ENCODE measurements at regions of chr15 and their contacts with region 1.

Region 1: DNA sequence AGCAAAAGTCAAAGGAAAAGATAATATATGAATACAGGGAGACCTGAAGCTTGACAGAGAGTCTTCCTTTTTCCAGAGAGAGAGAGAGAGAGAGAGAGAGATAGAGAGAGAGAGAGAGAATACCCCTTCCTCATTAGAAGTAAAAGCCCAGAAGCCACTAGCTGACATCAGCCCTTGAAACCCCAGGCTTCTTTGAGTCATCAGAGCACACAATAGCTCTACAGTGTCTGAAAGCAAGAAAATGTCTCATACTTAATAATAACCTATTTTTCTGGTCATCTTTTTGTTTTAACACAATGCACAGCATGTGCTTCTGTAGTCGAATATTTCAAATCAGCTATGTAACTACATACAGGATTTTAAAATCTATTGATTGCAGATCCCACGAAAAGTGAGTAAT is 109.2 kb upstream of the NANOGP8 start:
- DNase-seq: no peak
- H3K4me3 ChIP-seq: no peak overlapping the region
- H3K27ac ChIP-seq: no peak overlapping the region
- H3K4me1 ChIP-seq: no peaks in the 10 kb centered on the region
- H3K27me3 ChIP-seq: no peaks in the 10 kb centered on the region
- CTCF ChIP-seq: no peak
- POLR2A ChIP-seq: no peak

Region 2: DNA sequence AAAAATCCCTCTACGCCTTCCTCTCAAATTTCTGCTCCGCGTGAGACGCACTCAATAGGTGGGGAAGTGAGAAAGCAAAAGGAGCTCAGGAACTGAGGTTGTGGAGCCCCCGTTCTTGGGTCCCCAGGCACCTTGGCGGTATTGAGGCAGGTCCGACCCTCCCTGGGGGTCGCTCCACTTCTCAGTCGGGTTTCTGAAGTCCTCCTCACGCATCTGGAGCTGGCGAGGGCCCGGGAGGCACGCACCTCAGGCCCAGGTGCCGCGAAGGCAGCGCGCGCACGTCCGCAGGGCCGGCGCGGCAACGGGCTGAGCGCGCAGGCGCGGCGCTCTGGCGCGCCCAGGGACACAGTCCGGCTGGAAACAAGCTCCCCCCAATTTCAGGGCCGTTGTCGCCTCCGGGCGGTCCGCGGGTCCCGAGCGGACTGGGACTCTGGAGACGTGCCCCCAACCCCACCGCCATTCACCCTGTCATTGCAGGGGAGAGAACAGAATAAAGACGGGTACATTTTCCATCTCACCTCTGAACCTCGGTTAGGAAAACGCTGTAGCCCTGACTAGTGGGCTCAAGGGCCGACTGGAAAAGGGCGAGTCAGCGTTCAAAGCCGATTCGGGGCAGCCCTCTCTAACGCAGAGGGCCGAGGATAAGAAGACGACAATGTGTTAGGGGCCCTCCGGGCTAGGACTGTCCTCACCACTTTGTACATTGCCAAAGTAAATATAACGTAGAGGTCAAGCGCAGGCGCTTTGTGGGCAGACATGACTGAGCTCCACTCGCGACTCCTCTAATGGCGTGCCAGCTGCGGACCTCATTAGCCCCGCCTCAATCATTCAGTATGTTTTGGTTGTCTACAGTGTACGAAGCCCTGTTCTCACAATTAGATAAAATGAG is 206.1 kb before region 1 on chr15 and contains the start of gene ZNF770:
- intact Hi-C with region 1: no loop called
- DNase-seq: peak; percentile 60
- H3K4me3 ChIP-seq: peak within 1 kb of the TSS; percentile 81 to 88
- H3K27ac ChIP-seq: peak within 1 kb of the TSS; percentile 96 to 97
- H3K4me1 ChIP-seq: peaks cover 4% of the 10 kb centered on the region
- H3K27me3 ChIP-seq: no peaks in the 10 kb centered on the region
- CTCF ChIP-seq: peak in 2 of 4 experiments; percentile 37 to 44
- POLR2A ChIP-seq: peak; percentile 64
- total RNA-seq, gene ZNF770: 29.6 to 32.0 TPM

Region 3: DNA sequence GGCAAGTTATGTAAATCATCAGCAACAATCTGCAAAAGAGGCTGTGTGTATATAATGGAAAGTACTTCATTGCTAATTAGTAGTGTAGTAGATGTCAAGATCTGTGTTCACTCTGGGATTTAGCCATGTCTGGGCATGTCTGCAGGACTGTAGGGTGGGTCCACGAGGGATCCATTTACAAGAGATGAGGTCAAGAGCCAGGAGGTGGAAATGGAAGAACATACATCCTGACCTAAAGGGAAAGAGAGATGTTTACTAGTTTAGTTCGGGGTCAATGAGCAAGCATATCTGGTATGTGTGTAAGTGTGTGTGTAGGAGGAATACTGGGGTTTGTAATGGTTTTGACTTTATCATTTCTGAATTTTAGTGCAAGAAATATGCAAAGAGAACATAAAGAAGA is 62.3 kb after region 1 on chr15:
- intact Hi-C with region 1: loop called (anchors 10 kb)
- DNase-seq: no peak
- H3K4me3 ChIP-seq: no peak overlapping the region
- H3K27ac ChIP-seq: no peak overlapping the region
- H3K4me1 ChIP-seq: no peaks in the 10 kb centered on the region
- H3K27me3 ChIP-seq: no peaks in the 10 kb centered on the region
- CTCF ChIP-seq: no peak
- POLR2A ChIP-seq: no peak

Region 4: GRCh38 chr15:35358824-35359223 is 164.5 kb after region 1 on chr15:
- intact Hi-C with region 1: no loop called
- DNase-seq: no peak
- H3K4me3 ChIP-seq: no peak overlapping the region
- H3K27ac ChIP-seq: no peak overlapping the region
- H3K4me1 ChIP-seq: no peaks in the 10 kb centered on the region
- H3K27me3 ChIP-seq: no peaks in the 10 kb centered on the region
- CTCF ChIP-seq: no peak
- POLR2A ChIP-seq: no peak

Measured in prostate gland (tissue), 2 donors.